Psoas muscle (tissue), 8 donors: ENCODE measurements at regions of chr20 and their contacts with region 1.

Region 1: DNA sequence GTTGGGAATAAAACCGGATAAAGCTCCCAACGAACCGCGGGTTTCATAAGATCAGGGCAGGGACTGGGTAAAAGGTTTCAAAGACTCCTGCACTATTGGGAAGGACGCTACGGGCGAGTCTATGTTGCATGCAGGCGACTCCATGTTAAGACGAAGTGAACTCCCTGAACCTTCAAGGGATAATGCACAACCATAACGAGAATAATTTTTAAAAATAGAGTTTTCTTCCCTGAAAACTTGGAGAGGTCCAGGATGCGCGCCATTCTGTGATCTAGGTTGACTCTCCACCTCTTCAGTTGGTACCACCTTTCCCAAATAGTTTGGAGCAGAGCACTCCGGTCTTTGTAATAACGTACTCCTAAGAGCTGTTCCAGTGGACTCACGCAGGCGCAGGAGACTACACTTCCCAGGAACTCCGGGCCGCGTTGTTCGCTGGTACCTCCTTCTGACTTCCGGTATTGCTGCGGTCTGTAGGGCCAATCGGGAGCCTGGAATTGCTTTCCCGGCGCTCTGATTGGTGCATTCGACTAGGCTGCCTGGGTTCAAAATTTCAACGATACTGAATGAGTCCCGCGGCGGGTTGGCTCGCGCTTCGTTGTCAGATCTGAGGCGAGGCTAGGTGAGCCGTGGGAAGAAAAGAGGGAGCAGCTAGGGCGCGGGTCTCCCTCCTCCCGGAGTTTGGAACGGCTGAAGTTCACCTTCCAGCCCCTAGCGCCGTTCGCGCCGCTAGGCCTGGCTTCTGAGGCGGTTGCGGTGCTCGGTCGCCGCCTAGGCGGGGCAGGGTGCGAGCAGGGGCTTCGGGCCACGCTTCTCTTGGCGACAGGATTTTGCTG is at the start of gene TPX2:
- DNase-seq: peak; percentile 94 to 96
- ATAC-seq: peak; percentile 99 to 100 (median 100)
- H3K4me3 ChIP-seq: peak within 1 kb of the TSS; percentile 79
- H3K27ac ChIP-seq: peak within 1 kb of the TSS; percentile 86
- H3K4me1 ChIP-seq: peaks cover 10% of the 10 kb centered on the region
- H3K27me3 ChIP-seq: no peaks in the 10 kb centered on the region
- CTCF ChIP-seq: no peak
- total RNA-seq, gene TPX2: 0.63 to 2.2 (median 1.6) TPM

Region 2: DNA sequence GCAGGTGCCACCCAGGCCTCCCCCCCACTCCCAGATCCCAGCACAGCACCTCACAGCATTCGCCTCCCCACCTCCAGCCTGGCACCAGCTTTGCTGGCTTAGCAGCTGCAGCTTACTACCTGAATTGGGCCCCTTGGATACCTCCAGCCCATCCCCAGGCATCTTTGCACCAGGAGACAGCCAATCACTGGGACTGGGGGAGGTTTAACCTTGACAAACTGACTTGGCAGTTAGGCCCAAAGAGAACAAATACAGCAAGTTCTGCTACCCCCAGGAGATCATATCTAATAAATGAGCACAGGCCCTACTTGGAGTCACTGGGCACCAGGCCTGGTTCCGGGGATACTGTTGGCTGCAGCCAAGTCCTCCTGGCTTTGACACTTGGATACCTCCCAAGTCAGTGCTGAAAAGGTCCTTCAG is 204.1 kb after region 1 on chr20:
- intact Hi-C with region 1: loop called in 1 of 2 experiments (anchors 10 kb)
- DNase-seq: peak in 1 of 2 donors; percentile 67
- ATAC-seq: peak in 2 of 4 donors; percentile 48 to 75
- H3K4me3 ChIP-seq: no peak overlapping the region
- H3K27ac ChIP-seq: no peak overlapping the region
- H3K4me1 ChIP-seq: peaks cover 10% of the 10 kb centered on the region
- H3K27me3 ChIP-seq: no peaks in the 10 kb centered on the region
- CTCF ChIP-seq: no peak